ENCODE measurements at regions of chr10 and their contacts with region 1.

Region 1: DNA sequence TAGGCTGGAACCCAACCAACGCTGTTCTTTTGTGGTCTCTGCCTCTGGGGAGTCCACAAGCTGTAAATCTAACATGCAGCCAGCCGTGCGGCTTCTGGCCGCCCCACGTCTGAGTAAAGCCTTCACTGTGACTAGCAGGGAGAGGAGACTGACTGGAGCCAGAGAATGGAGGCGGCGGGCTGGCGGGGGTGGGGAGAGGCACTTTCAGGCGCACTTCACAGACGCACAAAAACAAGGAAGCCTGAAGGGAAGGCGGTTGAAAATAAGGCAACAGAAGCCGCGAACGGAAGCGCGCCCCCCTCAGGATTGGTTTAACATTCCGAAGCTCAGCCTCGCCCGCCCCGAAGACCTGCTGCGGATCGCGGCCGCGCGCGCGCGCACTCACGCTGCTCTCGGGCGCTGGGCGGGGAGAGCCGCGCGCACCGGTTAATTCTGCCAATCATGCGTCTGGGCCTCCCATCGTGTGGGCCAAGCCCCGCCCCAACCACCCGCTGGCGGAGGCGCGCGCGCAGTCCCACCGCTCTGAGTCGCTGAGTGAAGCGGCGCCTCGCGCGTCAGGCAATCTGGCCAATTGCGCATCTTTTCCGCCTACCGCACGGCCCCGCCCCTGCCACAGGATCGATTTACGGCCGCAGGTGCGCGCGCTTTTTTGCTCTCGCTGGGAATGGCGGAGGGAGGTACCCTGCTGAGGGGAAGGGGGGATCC is at the start of gene SFR1:
- DNase-seq: peak; percentile 99
- ATAC-seq: peak; percentile 96 to 97
- total RNA-seq, gene SFR1: 6.5 to 7.0 TPM

Region 2: DNA sequence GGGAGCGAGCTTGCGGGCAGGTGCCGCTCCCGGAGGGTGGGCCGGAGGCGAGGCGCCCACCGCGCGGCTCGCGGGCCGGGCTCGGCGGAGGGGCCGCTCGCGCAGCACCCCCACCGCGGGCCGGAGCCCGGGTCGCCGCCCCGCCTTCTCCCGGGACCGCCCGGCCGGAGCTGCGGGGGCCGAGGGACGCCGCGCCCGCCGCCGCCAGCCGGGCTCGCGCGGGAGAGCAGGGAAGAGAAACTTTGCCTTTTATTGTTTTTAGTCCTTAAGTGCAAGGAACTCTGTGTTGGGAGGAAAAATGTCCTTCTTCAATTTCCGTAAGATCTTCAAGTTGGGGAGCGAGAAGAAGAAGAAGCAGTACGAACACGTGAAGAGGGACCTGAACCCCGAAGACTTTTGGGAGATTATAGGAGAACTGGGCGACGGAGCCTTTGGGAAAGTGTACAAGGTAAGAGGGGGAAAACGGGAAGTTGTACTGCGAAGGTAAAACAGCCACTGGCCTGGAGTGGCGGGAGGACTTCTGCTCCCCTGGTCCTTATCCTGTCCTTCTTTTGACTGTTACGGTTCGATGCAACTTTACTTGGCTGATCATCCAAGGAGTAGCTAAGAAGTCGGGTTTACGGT is 154.1 kb before region 1 on chr10:
- intact Hi-C with region 1: loop called in 1 of 2 experiments (anchors 2 kb)
- DNase-seq: no peak
- ATAC-seq: peak; percentile 54 to 75

Region 3: GRCh38 chr10:104080762-104081161 is 40.9 kb before region 1 on chr10:
- intact Hi-C with region 1: no loop called
- DNase-seq: no peak
- ATAC-seq: no peak

Region 4: DNA sequence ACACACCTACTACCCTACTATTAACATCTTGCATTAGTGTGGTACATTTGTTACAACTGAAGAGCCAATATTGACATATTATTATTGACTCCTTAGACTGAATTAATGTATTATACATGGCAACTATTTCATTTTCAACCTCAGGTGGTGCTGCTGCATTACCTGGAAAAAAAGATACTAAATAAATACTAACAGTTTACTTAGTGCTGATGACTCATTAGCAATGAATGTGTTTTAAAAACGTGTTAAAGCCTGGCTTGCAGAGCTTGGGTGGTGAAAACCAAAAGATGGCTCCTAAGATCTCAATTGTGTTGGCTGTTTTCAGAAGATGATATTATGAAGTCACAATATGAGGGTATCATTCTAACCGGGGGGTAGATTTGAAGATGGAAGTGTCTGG is 75.7 kb after region 1 on chr10:
- intact Hi-C with region 1: no loop called
- DNase-seq: no peak
- ATAC-seq: no peak